ENCODE measurements at regions of chr12 and their contacts with region 1.

Region 1: GRCh38 chr12:19953734-19954133 is 414.6 kb upstream of the PDE3A start:
- DNase-seq: no peak
- H3K4me3 ChIP-seq: no peak overlapping the region
- H3K27ac ChIP-seq: peak overlapping the region in 1 of 2 experiments; percentile 8; a peak in 1 of 4 replicates
- H3K4me1 ChIP-seq: peaks cover 0 to 7% of the 10 kb centered on the region in 2 experiments; a peak in 2 of 4 replicates
- H3K27me3 ChIP-seq: no peaks in the 10 kb centered on the region
- CTCF ChIP-seq: no peak
- EP300 ChIP-seq: no peak
- RAD21 ChIP-seq: no peak

Region 2: DNA sequence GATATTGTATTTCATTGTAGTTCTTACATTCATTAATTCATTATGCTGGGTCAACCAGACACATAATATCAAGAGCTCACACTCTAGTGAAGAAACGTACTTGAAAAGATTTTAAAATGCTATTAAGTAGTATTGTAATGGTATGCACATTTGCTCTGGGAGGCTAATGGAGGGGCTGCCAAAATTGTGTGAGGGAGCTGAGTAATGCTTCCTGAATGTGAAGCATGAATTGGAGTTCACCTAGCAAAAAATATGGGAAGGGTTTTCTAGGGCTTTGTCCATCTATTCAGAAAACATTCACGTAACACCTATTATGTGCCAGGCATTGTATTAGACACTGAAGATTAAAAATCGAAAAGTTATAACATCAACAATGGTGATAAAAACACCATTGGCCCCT is 10.8 kb after region 1 on chr12:
- CTCF ChIA-PET with region 1: interaction called, 12 read pairs
- POLR2A ChIA-PET with region 1: no interaction called
- DNase-seq: no peak
- H3K4me3 ChIP-seq: no peak overlapping the region
- H3K27ac ChIP-seq: peak overlapping the region; percentile 40 to 89
- H3K4me1 ChIP-seq: peaks cover 13 to 19% of the 10 kb centered on the region in 2 experiments; a peak in 3 of 4 replicates
- H3K27me3 ChIP-seq: no peaks in the 10 kb centered on the region
- CTCF ChIP-seq: no peak
- EP300 ChIP-seq: no peak
- RAD21 ChIP-seq: no peak